Head of caudate nucleus (tissue), 42 donors: ENCODE measurements at regions of chr18 and their contacts with region 1.

Region 1: GRCh38 chr18:77054606-77055428 is 77.8 kb downstream of the MBP start:
- DNase-seq: peak; percentile 78 to 96 (median 90)

Region 2: DNA sequence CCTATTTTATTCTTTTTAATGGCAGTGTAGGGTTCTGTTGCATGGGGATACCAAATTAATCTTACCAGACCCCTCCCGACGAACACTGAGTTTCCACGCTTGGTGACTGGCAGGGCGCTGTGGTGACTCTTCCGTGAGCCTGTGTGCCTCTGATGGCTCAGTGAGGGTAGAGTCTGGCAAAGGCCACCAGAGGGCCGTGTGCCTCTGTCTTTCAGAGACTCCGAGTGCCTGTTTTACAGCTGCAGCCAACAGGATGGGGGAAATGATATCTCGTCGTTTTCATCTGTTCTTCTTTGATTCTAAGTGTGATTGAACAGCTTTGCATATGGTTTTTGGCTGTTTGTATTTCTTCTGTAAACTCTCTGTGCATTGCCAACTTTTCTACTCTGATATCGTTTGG is 132.7 kb before region 1 on chr18:
- intact Hi-C with region 1: loop called (anchors 5 kb)
- DNase-seq: peak; percentile 61 to 93 (median 81)

Region 3: DNA sequence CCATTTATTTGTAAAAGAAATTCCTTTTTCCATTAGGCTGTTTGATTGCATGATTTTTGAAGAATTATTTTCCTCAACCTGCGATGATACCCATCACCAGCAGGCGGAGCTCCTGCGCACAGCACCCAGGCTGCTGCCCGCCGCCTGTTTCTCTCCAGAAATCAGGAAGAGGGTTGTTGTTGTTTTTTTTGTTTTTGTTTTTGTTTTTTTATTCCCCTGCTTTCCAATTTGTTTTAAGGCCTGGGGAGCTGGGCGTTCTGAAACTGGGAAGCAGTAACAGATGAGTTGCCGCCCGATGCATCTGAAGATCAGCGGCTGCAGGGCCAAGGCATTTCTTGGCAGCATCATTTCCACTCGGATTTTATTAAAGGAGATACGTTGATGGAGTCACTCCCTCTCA is 54.3 kb before region 1 on chr18:
- intact Hi-C with region 1: loop called (anchors 5 kb)
- DNase-seq: peak in 32 of 42 donors; percentile 25 to 88 (median 72)

Region 4: GRCh38 chr18:77016936-77017335 is 37.9 kb before region 1 on chr18:
- intact Hi-C with region 1: loop called (anchors 2 kb)
- DNase-seq: peak; percentile 83 to 99 (median 95)